Activated B cell treated with CpG ODN at 0.5 μM for 24 hours (primary cell): ENCODE measurements at regions of chr5 and their contacts with region 1.

Region 1: DNA sequence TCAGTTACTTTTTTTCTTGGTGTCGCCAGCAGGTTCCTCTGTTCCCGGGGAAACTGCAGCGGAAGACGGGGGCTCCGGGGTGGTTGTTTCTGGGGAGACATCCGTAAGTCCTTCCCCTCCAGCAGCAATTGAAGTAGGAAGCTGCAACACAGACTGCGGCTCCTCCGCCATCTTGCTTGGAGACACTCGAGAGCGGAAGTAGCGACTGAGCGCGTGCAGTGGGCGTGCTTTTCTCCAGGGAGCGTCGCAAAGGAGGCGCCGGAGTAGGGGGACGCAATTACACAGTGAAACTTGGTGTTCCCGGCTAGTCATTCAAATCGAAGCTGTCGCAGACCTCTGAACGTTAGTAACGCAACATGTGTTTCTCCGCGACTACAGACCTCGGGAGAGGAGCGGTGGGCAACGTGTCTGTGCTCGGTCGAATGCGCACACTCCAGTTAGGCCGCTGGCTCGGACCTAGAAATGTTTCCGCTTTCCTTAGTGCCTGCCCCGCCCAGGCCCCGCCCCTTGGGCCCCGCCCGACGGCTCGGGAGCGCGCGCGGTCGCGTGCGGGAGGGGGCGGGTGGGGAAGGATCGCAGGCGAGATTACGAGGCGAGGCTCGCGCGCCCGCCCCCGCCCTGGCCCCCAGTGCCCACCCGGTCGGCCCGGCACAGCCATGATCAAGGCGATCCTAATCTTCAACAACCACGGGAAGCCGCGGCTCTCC is at the starts of genes AP3S1 and ATG12:
- DNase-seq: peak; percentile 96
- ATAC-seq: peak; percentile 81
- H3K4me3 Mint-ChIP-seq: peak within 1 kb of the TSS; percentile 98
- H3K27ac Mint-ChIP-seq: peak within 1 kb of the TSS; percentile 100
- H3K4me1 Mint-ChIP-seq: peaks cover 67% of the 10 kb centered on the region
- H3K27me3 Mint-ChIP-seq: no peaks in the 10 kb centered on the region
- CTCF ChIP-seq: no peak
- total RNA-seq, gene AP3S1: 41.5 and 43.2 TPM in 2 replicates
- total RNA-seq, gene ATG12: 54.8 and 73.9 TPM in 2 replicates

Region 2: DNA sequence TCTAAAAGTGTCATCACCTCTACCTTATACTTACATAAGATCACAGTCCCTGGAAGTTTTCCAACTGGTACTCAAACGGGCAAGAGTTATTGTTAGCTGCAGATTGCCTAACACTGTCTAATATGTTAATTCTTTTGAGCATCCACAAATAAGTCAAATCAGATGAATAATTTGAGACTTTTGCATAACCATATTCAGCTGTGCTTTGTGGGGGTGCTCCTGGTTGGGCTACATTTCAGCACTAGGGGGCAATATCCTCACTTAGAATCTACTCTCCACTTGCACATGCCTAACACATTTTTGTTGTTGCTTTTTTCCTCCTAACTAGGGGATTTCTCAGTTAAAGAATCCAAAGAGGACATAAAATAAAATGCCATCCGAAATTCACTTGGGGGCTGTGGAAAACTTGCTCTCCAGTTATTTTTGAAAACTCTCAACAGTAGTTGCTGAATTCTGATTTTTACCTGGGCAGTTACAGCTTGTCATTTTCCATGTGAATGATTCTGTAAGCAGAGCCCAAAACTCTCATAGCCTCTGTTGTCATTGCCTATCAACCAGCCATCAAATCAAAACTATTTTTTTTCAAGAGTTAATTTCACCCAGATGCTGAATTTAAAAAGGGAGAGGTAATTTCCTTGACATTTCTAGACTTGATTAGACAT is 743.4 kb before region 1 on chr5:
- CTCF ChIA-PET with region 1: no interaction called
- POLR2A ChIA-PET with region 1: interaction called, 3 read pairs
- intact Hi-C with region 1: loop called (anchors 2 kb)
- DNase-seq: no peak
- ATAC-seq: peak; percentile 75
- H3K4me3 Mint-ChIP-seq: no peak overlapping the region
- H3K27ac Mint-ChIP-seq: no peak overlapping the region
- H3K4me1 Mint-ChIP-seq: no peaks in the 10 kb centered on the region
- H3K27me3 Mint-ChIP-seq: peaks cover 3% of the 10 kb centered on the region
- CTCF ChIP-seq: no peak

Region 3: GRCh38 chr5:115296124-115297022 is 545.2 kb before region 1 on chr5 and contains the start of gene CCDC112:
- CTCF ChIA-PET with region 1: no interaction called
- POLR2A ChIA-PET with region 1: no interaction called
- intact Hi-C with region 1: loop called (anchors 5 kb)
- DNase-seq: peak; percentile 64
- ATAC-seq: peak; percentile 83
- H3K4me3 Mint-ChIP-seq: peak within 1 kb of the TSS; percentile 85
- H3K27ac Mint-ChIP-seq: peak within 1 kb of the TSS; percentile 47
- H3K4me1 Mint-ChIP-seq: peaks cover 13% of the 10 kb centered on the region
- H3K27me3 Mint-ChIP-seq: no peaks in the 10 kb centered on the region
- CTCF ChIP-seq: no peak
- total RNA-seq, gene CCDC112: 5.2 and 5.3 TPM in 2 replicates

Region 4: GRCh38 chr5:115601701-115602590 is 239.6 kb before region 1 on chr5 and contains the start of gene TICAM2:
- CTCF ChIA-PET with region 1: no interaction called
- POLR2A ChIA-PET with region 1: interaction called, 14 read pairs
- intact Hi-C with region 1: loop called (anchors 1 kb)
- DNase-seq: peak; percentile 68
- ATAC-seq: peak; percentile 80
- H3K4me3 Mint-ChIP-seq: peak within 1 kb of the TSS; percentile 88
- H3K27ac Mint-ChIP-seq: peak within 1 kb of the TSS; percentile 98
- H3K4me1 Mint-ChIP-seq: peaks cover 56% of the 10 kb centered on the region
- H3K27me3 Mint-ChIP-seq: no peaks in the 10 kb centered on the region
- CTCF ChIP-seq: no peak
- total RNA-seq, gene TICAM2: 12.4 and 13.3 TPM in 2 replicates

Region 5: GRCh38 chr5:115831163-115831768 is 10.3 kb before region 1 on chr5:
- CTCF ChIA-PET with region 1: interaction called, 15 read pairs
- POLR2A ChIA-PET with region 1: interaction called, 7 read pairs
- intact Hi-C with region 1: loop called (anchors 1 kb)
- DNase-seq: no peak
- ATAC-seq: peak; percentile 64
- H3K4me3 Mint-ChIP-seq: no peak overlapping the region
- H3K27ac Mint-ChIP-seq: no peak overlapping the region
- H3K4me1 Mint-ChIP-seq: peaks cover 5% of the 10 kb centered on the region
- H3K27me3 Mint-ChIP-seq: no peaks in the 10 kb centered on the region
- CTCF ChIP-seq: peak; percentile 87

Region 6: DNA sequence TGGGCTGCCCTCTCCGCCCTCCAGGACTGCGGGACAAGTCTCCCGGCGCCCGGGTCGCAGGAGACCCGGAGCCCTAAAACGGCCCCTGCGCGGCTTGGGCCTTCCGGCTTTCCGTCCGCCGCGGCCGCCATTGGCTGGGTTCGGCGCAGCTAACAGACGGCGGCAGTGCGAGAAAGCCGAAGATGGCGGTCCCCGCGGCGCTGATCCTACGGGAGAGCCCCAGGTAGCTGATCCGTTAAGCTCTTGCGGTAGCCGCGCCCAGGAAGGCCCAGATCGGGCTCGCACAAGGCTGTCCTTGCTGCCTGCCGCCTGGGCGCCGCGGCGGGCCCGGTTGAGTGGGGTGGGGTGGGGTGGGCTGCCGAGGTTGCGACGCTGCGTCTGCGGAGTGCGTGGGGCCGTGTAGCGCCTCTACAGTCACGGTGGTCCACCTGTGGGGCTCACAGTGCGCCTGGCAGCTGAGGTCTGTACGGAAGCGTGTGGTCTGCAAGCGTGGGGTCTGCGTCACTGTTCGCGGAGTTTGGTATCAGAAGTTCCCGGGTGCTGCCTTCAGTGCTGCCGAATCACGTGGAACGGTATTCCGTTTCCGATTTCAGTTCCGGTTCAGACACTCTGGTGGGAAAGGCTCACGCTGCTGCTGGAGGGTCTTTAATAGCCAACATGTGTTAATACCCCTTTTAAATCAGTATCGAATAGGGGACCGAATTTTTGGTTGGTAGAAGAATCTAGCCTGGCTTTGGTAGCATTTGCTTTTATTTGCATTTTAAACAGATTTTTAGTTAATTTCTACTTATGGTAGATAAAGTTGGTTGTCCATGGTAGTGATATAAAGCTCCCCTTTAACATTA is 243.6 kb after region 1 on chr5 and contains the start of gene COMMD10:
- CTCF ChIA-PET with region 1: no interaction called
- POLR2A ChIA-PET with region 1: interaction called, 9 read pairs
- intact Hi-C with region 1: loop called (anchors 1 kb)
- DNase-seq: peak; percentile 72
- ATAC-seq: peak; percentile 91
- H3K4me3 Mint-ChIP-seq: peak within 1 kb of the TSS; percentile 95
- H3K27ac Mint-ChIP-seq: peak within 1 kb of the TSS; percentile 96
- H3K4me1 Mint-ChIP-seq: peaks cover 36% of the 10 kb centered on the region
- H3K27me3 Mint-ChIP-seq: no peaks in the 10 kb centered on the region
- CTCF ChIP-seq: no peak
- total RNA-seq, gene COMMD10: 35.7 and 44.4 TPM in 2 replicates